Kidney (tissue), 22 donors: ENCODE measurements at regions of chr18 and their contacts with region 1.

Region 1: DNA sequence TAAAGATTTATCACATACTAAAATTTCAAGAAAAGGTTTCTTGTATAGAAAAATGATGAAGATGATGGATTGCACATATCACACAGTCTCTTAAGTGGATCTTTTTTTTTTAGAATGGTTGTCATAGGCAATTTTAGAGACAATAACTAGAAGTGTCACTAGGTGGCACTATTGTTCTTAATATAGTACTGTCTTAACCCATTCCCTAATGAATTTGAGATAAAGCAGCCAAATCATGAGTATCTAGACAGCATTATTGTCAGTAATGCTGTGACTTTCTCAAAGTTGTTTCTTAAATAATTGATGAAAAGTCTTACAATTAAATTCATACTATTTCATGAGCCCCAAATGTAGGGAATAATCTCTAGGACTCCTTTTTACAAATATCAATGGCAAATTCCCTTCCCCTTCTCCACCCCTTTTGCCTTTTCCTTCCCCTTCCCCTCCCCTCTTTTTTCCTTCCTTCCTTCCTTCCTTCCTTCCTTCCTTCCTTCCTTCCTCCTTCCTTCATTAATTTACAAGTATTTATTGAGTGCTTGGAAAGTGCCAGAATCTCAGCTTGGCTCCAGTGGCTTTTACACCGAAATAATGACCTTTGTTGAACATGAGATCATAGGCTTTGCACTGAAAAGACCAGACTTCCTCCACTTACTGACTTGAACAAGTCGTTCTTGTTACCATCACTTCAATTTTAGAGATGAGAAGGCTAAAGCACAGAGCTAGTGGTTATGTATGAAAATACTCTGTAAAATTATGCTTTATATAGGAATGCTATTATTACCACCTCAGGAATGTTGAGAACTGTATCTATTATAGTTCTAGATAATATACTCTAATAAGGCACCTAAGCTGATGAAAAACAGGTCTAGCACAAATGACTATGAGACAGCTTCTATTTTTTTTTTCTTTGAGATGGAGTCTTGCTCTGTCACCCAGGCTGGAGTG is 19.8 kb downstream of the MYL12B start:
- DNase-seq: peak in 2 of 5 donors; percentile 90
- H3K4me3 ChIP-seq: no peak overlapping the region
- H3K27ac ChIP-seq: no peak overlapping the region
- H3K4me1 ChIP-seq: no peaks in the 10 kb centered on the region
- H3K27me3 ChIP-seq: no peaks in the 10 kb centered on the region
- CTCF ChIP-seq: peak; percentile 63

Region 2: DNA sequence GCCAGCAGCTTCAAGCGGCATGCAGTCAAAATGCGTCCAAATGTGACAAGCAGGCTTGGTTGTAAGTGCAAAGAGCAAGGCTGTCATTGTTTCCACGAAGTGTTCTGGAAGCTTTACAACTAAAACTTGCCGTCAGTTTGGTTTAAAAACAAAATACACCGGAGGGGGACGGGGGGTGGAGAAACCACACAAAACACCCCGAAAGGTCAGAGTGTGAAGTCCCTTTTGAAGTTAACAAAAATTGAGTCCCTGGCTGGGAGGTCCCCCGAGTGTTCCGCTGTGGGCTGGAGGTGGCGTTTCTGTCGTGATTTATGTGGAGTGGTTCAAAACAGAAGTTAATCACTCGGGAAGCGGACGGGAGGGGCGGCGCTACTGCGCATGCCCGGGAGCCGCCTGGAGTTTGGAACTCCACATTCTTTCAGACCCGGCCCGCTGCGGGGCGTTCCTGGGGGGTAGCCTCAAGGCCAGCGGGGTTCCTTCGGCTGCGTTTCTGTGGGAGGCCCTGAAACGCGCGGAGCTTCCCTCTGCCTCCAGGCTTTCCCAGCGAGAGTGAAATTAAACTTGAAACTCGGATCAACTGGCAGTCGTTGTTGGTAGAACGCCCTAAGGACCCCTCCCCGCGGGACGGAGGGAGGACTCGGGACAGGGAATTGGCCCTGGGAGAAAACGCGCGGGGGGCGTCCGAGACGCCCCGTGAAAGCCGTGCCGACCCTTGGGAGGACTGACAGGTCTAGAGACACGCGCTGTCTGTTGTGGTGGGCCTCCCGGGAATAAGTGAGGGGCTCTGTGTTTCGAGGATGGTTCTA is 169.7 kb after region 1 on chr18:
- intact Hi-C with region 1: loop called (anchors 10 kb)
- DNase-seq: peak; percentile 96 to 99 (median 98)
- H3K4me3 ChIP-seq: peak overlapping the region; percentile 91 to 94 (median 94)
- H3K27ac ChIP-seq: peak overlapping the region; percentile 98 to 99
- H3K4me1 ChIP-seq: peaks cover 4 to 13% (median 8%) of the 10 kb centered on the region in 3 donors
- H3K27me3 ChIP-seq: no peaks in the 10 kb centered on the region
- CTCF ChIP-seq: no peak

Region 3: GRCh38 chr18:3665780-3666525 is 384.2 kb after region 1 on chr18:
- intact Hi-C with region 1: loop called (anchors 5 kb)
- DNase-seq: peak; percentile 86 to 94 (median 90)
- H3K4me3 ChIP-seq: peak overlapping the region in 2 of 3 donors; percentile 10 to 41
- H3K27ac ChIP-seq: peak overlapping the region; percentile 66 to 77
- H3K4me1 ChIP-seq: peaks cover 0 to 7% (median 3%) of the 10 kb centered on the region in 3 donors
- H3K27me3 ChIP-seq: no peaks in the 10 kb centered on the region
- CTCF ChIP-seq: peak; percentile 99